Psoas muscle (tissue), 8 donors: ENCODE measurements at regions of chr17 and their contacts with region 1.

Region 1: GRCh38 chr17:32783602-32784001 is 93.3 kb downstream of the MYO1D start:
- DNase-seq: no peak
- ATAC-seq: peak in 3 of 4 donors; percentile 49 to 73 (median 52)
- H3K4me3 ChIP-seq: no peak overlapping the region
- H3K27ac ChIP-seq: no peak overlapping the region
- H3K4me1 ChIP-seq: no peaks in the 10 kb centered on the region
- H3K27me3 ChIP-seq: no peaks in the 10 kb centered on the region
- CTCF ChIP-seq: peak; percentile 80

Region 2: DNA sequence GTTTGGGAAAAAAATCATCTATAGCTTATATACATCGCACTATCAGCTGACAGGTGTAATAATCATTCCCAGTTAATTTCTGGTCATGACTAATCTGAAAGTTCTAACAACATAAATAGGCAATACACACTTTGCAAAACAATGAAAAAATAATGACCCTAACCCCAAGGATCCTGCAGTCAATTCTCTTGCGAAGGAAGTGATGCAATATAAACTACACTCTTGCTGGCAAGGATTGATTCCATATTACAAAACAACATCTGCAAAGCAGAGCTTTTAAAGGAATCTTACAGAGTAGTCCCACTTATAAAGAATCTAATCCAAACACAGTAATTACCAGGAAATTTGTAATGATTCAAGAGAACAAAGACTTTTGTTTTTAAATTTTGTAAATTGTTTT is 19.9 kb after region 1 on chr17:
- intact Hi-C with region 1: no loop called
- DNase-seq: no peak
- ATAC-seq: no peak
- H3K4me3 ChIP-seq: no peak overlapping the region
- H3K27ac ChIP-seq: no peak overlapping the region
- H3K4me1 ChIP-seq: no peaks in the 10 kb centered on the region
- H3K27me3 ChIP-seq: no peaks in the 10 kb centered on the region
- CTCF ChIP-seq: no peak

Region 3: GRCh38 chr17:32877164-32877764 is 93.7 kb after region 1 on chr17:
- intact Hi-C with region 1: loop called (anchors 2 to 5 kb)
- DNase-seq: peak; percentile 93 to 95
- ATAC-seq: peak; percentile 100
- H3K4me3 ChIP-seq: peak overlapping the region; percentile 88
- H3K27ac ChIP-seq: peak overlapping the region; percentile 43
- H3K4me1 ChIP-seq: peaks cover 4% of the 10 kb centered on the region
- H3K27me3 ChIP-seq: peaks cover 0 to 3% (median 2%) of the 10 kb centered on the region in 3 donors
- CTCF ChIP-seq: peak; percentile 91

Region 4: GRCh38 chr17:32909787-32910369 is 126.3 kb after region 1 on chr17:
- intact Hi-C with region 1: loop called in 1 of 2 experiments (anchors 5 kb)
- DNase-seq: peak in 1 of 2 donors; percentile 45
- ATAC-seq: peak; percentile 49 to 69 (median 62)
- H3K4me3 ChIP-seq: no peak overlapping the region
- H3K27ac ChIP-seq: no peak overlapping the region
- H3K4me1 ChIP-seq: no peaks in the 10 kb centered on the region
- H3K27me3 ChIP-seq: peaks cover 0 to 7% (median 0%) of the 10 kb centered on the region in 3 donors
- CTCF ChIP-seq: peak; percentile 60

Region 5: DNA sequence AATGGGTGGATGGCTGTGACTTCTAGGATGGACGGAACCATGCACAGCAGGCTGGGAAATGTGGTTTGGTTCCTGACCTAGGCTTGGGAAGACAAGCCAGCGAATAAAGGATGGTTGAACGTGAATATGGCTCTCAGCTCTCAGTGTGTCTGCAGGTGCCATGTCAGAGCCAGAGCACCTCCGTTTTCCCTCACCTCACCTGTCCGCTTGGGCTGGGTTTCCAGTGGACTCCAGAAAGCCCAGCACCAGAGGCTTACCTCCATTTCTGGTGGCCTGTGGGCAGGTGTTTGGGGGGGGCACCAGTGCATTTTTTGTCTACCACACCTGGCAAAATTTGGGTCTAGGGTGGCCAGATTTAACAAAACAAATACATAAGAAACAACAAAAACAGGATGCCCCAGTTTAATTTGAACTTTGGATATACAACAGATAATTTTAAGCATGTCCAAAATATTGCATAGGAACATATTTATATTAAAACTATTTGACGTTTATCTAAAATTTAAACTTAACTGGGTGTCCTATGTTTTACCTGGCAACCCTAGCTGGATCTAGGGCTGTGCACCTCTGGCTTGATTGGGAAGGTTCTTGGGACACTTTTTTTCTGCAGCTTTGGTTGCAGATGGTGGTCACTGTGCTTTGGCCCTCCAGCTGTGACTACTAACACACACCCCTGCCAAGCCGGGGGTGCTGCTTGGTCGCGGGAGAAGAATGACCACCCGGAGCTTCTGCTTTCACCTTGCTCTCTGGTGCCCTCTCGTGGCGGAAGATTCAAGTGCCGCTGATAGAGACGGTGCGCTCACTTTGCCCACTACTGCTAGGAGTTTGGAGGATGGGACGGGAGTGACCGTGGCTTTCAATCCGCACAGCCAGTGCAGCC is 214.4 kb after region 1 on chr17:
- intact Hi-C with region 1: loop called (anchors 2 to 5 kb)
- DNase-seq: peak; percentile 73 to 83
- ATAC-seq: peak; percentile 54 to 73 (median 70)
- H3K4me3 ChIP-seq: no peak overlapping the region
- H3K27ac ChIP-seq: no peak overlapping the region
- H3K4me1 ChIP-seq: no peaks in the 10 kb centered on the region
- H3K27me3 ChIP-seq: peaks cover 0 to 12% (median 11%) of the 10 kb centered on the region in 3 donors
- CTCF ChIP-seq: peak; percentile 82

Region 6: GRCh38 chr17:33750943-33751701 is 967.5 kb after region 1 on chr17:
- intact Hi-C with region 1: loop called in 1 of 2 experiments (anchors 5 kb)
- DNase-seq: peak; percentile 26 to 72
- ATAC-seq: peak; percentile 56 to 71 (median 64)
- H3K4me3 ChIP-seq: no peak overlapping the region
- H3K27ac ChIP-seq: no peak overlapping the region
- H3K4me1 ChIP-seq: no peaks in the 10 kb centered on the region
- H3K27me3 ChIP-seq: peaks cover 0 to 18% (median 2%) of the 10 kb centered on the region in 3 donors
- CTCF ChIP-seq: peak; percentile 92